ENCODE measurements at regions of chr2 and their contacts with region 1.

Region 1: GRCh38 chr2:206783718-206784117 is 18.3 kb downstream of the FASTKD2 start:
- DNase-seq: peak in 3 of 4 experiments; percentile 12 to 26 (median 25)
- ATAC-seq: peak; percentile 82
- H3K4me3 ChIP-seq: no peak overlapping the region
- H3K27ac ChIP-seq: no peak overlapping the region
- H3K4me1 ChIP-seq: no peaks in the 10 kb centered on the region
- H3K27me3 ChIP-seq: no peaks in the 10 kb centered on the region
- CTCF ChIP-seq: peak; percentile 19 to 45 (median 33); a peak in 3 of 6 replicates
- EP300 ChIP-seq: no peak
- POLR2A ChIP-seq: no peak
- RAD21 ChIP-seq: no peak

Region 2: DNA sequence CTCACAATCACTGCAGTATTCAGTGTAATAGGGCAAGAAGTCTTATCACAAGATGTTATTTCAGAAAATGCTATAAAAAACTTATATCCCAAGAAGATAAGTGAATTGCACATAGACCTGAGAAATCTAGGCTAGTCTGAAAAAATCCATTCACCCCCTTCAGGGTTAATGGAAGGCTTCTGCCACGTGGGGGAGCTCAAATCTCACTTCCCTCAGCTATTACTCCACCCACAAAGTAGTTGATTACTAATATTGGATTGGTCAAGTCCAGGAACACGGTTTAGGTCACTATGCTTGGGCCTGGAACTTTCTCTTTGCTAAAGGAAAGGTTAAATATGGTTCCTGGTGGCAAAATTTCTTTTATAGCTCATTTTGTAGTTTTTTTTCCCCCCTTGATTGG is 391.6 kb before region 1 on chr2:
- CTCF ChIA-PET with region 1: no interaction called
- POLR2A ChIA-PET with region 1: no interaction called
- in situ Hi-C with region 1: no loop called
- intact Hi-C with region 1: loop called (anchors 5 kb)
- DNase-seq: peak; percentile 21 to 53 (median 24)
- ATAC-seq: peak; percentile 78
- H3K4me3 ChIP-seq: no peak overlapping the region
- H3K27ac ChIP-seq: no peak overlapping the region
- H3K4me1 ChIP-seq: no peaks in the 10 kb centered on the region
- H3K27me3 ChIP-seq: no peaks in the 10 kb centered on the region
- CTCF ChIP-seq: peak; percentile 45 to 63 (median 51); a peak in 5 of 6 replicates
- EP300 ChIP-seq: no peak
- POLR2A ChIP-seq: no peak
- RAD21 ChIP-seq: peak in 1 of 2 experiments; percentile 56; a peak in 2 of 4 replicates

Region 3: GRCh38 chr2:206556357-206556949 is 227.3 kb before region 1 on chr2:
- CTCF ChIA-PET with region 1: no interaction called
- POLR2A ChIA-PET with region 1: no interaction called
- in situ Hi-C with region 1: no loop called
- intact Hi-C with region 1: loop called (anchors 1 kb)
- DNase-seq: peak; percentile 12 to 33 (median 18)
- ATAC-seq: peak; percentile 71
- H3K4me3 ChIP-seq: no peak overlapping the region
- H3K27ac ChIP-seq: no peak overlapping the region
- H3K4me1 ChIP-seq: no peaks in the 10 kb centered on the region
- H3K27me3 ChIP-seq: no peaks in the 10 kb centered on the region
- CTCF ChIP-seq: peak; percentile 29 to 59 (median 31); a peak in 3 of 6 replicates
- EP300 ChIP-seq: no peak
- POLR2A ChIP-seq: no peak
- RAD21 ChIP-seq: peak in 1 of 2 experiments; percentile 50; a peak in 3 of 4 replicates

Region 4: GRCh38 chr2:206693399-206694137 is 90.2 kb before region 1 on chr2:
- CTCF ChIA-PET with region 1: no interaction called
- POLR2A ChIA-PET with region 1: no interaction called
- in situ Hi-C with region 1: no loop called
- intact Hi-C with region 1: loop called (anchors 5 kb)
- DNase-seq: peak; percentile 25 to 59 (median 30)
- ATAC-seq: peak; percentile 81
- H3K4me3 ChIP-seq: no peak overlapping the region
- H3K27ac ChIP-seq: no peak overlapping the region
- H3K4me1 ChIP-seq: no peaks in the 10 kb centered on the region
- H3K27me3 ChIP-seq: no peaks in the 10 kb centered on the region; a peak in 1 of 5 replicates
- CTCF ChIP-seq: peak; percentile 37 to 60 (median 51); a peak in 5 of 6 replicates
- EP300 ChIP-seq: no peak
- POLR2A ChIP-seq: no peak
- RAD21 ChIP-seq: peak; percentile 63 to 69